ENCODE measurements at regions of chr2 and their contacts with region 1.

Region 1: DNA sequence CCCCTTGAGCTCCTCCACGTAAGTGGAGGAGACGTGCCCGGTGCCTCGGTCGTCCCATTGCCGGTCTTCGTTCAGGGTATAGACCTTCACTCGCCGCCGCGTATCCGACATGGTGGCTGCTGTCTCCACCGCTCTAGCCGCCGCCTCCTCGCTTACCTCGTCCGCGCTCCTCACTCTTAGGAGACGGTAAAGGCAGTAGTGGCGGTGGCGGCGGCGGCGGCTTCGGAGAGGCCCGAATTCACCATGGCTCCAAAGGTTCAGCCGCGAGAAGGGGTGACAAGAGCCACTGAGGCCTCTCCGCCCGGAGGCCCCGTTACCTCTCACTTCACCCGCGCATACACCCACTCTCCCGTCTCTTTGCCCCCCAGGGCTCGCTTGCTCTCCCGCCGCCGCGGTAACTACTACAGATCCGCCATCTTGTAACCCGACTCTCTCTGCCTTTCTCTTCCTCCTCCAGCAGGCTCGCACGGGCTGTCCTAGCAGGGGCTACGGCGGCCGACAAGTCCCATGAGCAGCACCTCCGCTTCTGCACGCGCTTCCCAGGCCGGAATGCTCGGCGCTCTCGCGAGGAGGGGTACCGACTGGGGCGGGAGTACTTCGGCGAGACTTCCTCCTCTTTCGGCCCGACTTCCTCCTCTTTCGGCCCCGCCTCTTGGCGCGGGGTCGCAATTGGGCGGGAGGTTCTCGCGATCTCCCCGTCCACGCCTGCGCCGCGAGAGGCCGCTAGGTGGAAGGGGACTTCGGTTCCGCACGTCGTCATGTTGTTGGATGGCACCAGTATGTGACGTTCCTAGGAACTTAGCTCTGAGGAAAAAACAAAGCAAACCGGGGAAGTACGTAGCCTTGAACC is at the start of gene PPP4R3B:
- DNase-seq: peak; percentile 99
- ATAC-seq: peak; percentile 84
- H3K4me3 ChIP-seq: peak within 1 kb of the TSS; percentile 94 to 99 (median 96)
- H3K4me3 Mint-ChIP-seq: no peak within 1 kb of the TSS
- H3K27ac ChIP-seq: peak within 1 kb of the TSS; percentile 96 to 98
- H3K27ac Mint-ChIP-seq: no peak within 1 kb of the TSS
- H3K4me1 ChIP-seq: peaks cover 42 to 46% of the 10 kb centered on the region in 2 donors
- H3K4me1 Mint-ChIP-seq: peaks cover 47% of the 10 kb centered on the region
- H3K27me3 ChIP-seq: no peaks in the 10 kb centered on the region
- H3K27me3 Mint-ChIP-seq: no peaks in the 10 kb centered on the region
- CTCF ChIP-seq: peak; percentile 36
- total RNA-seq, gene PPP4R3B: 89.1 and 93.8 TPM in 2 replicates

Region 2: GRCh38 chr2:53767405-53768241 is 1849.8 kb before region 1 on chr2 and contains the start of gene CHAC2:
- CTCF ChIA-PET with region 1: no interaction called
- POLR2A ChIA-PET with region 1: no interaction called
- intact Hi-C with region 1: loop called (anchors 1 kb)
- DNase-seq: peak; percentile 93
- ATAC-seq: peak; percentile 93
- H3K4me3 ChIP-seq: peak within 1 kb of the TSS; percentile 81 to 99 (median 89)
- H3K4me3 Mint-ChIP-seq: peak within 1 kb of the TSS; percentile 89
- H3K27ac ChIP-seq: peak within 1 kb of the TSS; percentile 93 to 97
- H3K27ac Mint-ChIP-seq: peak within 1 kb of the TSS; percentile 95
- H3K4me1 ChIP-seq: peaks cover 7 to 10% of the 10 kb centered on the region in 2 donors
- H3K4me1 Mint-ChIP-seq: peaks cover 31% of the 10 kb centered on the region
- H3K27me3 ChIP-seq: no peaks in the 10 kb centered on the region
- H3K27me3 Mint-ChIP-seq: no peaks in the 10 kb centered on the region
- CTCF ChIP-seq: no peak
- total RNA-seq, gene CHAC2: 2.1 and 3.2 TPM in 2 replicates

Region 3: DNA sequence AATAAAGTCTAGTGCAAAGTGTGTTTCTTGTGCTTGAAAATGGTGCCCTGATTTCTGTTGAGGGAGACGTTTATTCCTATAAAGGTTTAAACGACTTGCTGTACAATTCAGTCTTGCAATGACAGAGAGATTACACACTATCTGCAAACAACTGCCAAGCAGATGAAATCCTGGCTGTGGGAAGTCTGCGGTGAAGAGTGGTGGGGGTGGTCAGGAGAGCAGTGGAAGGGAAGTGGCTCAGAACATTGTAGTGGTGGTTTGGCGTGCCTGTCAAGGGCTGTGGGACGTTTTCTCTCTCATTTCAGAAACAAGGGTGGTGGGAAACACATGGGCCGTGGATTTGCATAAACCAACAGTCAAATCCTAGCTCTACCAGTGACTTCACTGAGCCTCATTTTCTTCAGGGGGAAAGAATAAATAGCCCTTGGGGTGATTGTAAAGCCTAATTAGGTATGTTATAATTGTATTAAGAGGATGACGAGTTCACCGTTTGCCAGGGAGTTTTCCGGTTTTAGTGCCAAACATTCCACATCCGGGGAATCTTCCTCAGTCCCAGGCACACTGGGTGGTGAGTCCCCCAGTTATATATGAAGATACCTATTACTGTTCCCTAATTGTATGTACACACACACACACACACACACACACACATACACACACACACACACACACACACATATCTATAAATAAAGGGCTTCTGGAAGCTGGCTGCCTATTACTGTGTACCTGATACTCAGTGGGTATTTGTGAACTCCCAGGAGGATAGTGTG is 1046.3 kb before region 1 on chr2:
- CTCF ChIA-PET with region 1: no interaction called
- POLR2A ChIA-PET with region 1: no interaction called
- intact Hi-C with region 1: loop called (anchors 10 kb)
- DNase-seq: peak; percentile 83
- ATAC-seq: peak; percentile 42
- H3K4me3 ChIP-seq: peak overlapping the region in 3 of 5 experiments; percentile 1 to 56 (median 32)
- H3K4me3 Mint-ChIP-seq: peak overlapping the region; percentile 83
- H3K27ac ChIP-seq: peak overlapping the region; percentile 92 to 93
- H3K27ac Mint-ChIP-seq: peak overlapping the region; percentile 97
- H3K4me1 ChIP-seq: peaks cover 92 to 93% of the 10 kb centered on the region in 2 donors
- H3K4me1 Mint-ChIP-seq: peaks cover 92% of the 10 kb centered on the region
- H3K27me3 ChIP-seq: no peaks in the 10 kb centered on the region
- H3K27me3 Mint-ChIP-seq: no peaks in the 10 kb centered on the region
- CTCF ChIP-seq: no peak

Region 4: DNA sequence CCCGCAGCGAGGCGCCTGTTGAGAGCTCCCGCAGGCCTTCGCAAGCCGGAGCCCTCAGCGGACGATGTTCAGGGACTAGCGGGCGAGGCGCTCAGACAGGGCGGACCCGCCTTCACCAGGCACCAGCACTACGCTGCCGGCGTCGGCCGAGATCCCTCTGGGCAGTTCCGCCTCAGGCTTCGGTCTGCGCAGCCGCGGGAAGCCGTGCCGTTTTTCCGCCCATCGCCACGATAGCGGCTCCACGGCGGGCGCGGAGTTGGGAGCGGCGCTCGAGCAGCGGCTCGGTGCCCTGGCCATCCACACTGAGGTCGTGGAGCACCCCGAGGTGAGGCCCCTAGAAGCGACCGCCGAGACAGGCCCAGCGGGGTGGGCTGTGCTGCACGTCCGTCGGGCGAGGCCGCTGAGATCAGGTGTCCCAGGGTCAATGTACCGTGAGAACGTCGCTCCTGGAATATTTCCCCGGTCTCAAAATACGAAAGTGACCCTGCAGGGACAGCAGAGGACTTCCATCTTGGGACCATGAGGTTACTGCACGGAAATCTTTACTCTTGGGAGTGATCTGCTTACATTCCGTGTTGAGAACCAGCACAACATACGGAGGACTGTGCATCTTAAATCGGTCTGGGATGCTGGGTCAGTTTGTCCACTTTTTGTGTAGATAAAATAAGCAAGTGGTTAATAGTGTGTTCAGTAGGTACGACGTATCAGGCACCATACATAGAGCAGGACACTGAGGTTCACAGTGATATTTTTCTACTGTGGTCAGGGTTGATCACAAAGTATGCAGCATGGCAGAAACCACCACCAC is 335.1 kb before region 1 on chr2:
- CTCF ChIA-PET with region 1: no interaction called
- POLR2A ChIA-PET with region 1: no interaction called
- intact Hi-C with region 1: loop called (anchors 1 kb)
- DNase-seq: peak; percentile 91
- ATAC-seq: peak; percentile 99
- H3K4me3 ChIP-seq: peak overlapping the region; percentile 76 to 92 (median 87)
- H3K4me3 Mint-ChIP-seq: peak overlapping the region; percentile 93
- H3K27ac ChIP-seq: peak overlapping the region; percentile 82 to 89
- H3K27ac Mint-ChIP-seq: peak overlapping the region; percentile 99
- H3K4me1 ChIP-seq: peaks cover 11 to 18% of the 10 kb centered on the region in 2 donors
- H3K4me1 Mint-ChIP-seq: peaks cover 24% of the 10 kb centered on the region
- H3K27me3 ChIP-seq: no peaks in the 10 kb centered on the region
- H3K27me3 Mint-ChIP-seq: no peaks in the 10 kb centered on the region
- CTCF ChIP-seq: no peak

Region 5: GRCh38 chr2:55693181-55694134 is 76.1 kb after region 1 on chr2 and contains the start of gene PNPT1:
- CTCF ChIA-PET with region 1: no interaction called
- POLR2A ChIA-PET with region 1: no interaction called
- intact Hi-C with region 1: loop called (anchors 1 kb)
- DNase-seq: peak; percentile 92
- ATAC-seq: peak; percentile 100
- H3K4me3 ChIP-seq: peak within 1 kb of the TSS; percentile 75 to 97 (median 78)
- H3K4me3 Mint-ChIP-seq: peak within 1 kb of the TSS; percentile 99
- H3K27ac ChIP-seq: peak within 1 kb of the TSS; percentile 8 to 66
- H3K27ac Mint-ChIP-seq: peak within 1 kb of the TSS; percentile 90
- H3K4me1 ChIP-seq: peaks cover 9 to 13% of the 10 kb centered on the region in 2 donors
- H3K4me1 Mint-ChIP-seq: peaks cover 26% of the 10 kb centered on the region
- H3K27me3 ChIP-seq: no peaks in the 10 kb centered on the region
- H3K27me3 Mint-ChIP-seq: peaks cover 2% of the 10 kb centered on the region
- CTCF ChIP-seq: no peak
- total RNA-seq, gene PNPT1: 23.1 and 28.2 TPM in 2 replicates